ENCODE measurements at regions of chr14 and their contacts with region 1.

Region 1: DNA sequence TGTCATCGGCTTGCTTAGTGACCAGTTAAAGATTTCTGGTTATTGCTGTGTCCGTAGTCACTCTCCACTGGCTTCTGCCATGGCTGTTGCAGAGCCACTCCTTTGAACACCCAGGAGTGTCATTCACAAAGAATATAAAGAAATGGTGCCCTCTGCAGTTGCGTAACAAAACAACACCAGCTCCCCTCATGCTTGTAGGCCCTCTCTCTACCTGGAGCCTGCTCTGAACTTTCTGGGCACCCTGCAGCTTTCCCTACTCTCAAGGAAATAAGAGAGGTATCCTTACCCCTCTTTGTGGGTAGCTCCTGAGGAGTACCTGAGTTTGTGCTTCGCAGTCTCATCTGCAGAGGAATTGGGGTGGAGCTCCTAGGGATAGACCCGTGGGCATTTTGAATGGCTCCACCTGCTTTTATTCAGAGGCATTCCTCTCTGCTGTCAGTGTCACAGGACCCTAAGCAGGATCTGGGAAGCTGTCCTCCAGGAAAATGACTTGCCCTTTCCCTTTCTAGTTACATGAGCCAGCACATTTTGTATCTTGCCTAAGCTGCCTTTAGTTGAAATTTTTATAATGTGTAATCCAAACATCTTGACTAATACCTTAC is 97.2 kb upstream of the TMEM260 start:
- DNase-seq: peak; percentile 16
- H3K4me3 ChIP-seq: no peak overlapping the region
- H3K27ac ChIP-seq: no peak overlapping the region
- H3K4me1 ChIP-seq: no peaks in the 10 kb centered on the region
- H3K27me3 ChIP-seq: peaks cover 1 to 2% of the 10 kb centered on the region in 2 experiments
- CTCF ChIP-seq: peak; percentile 16 to 26
- POLR2A ChIP-seq: no peak

Region 2: GRCh38 chr14:55707365-55707804 is 775.0 kb before region 1 on chr14:
- CTCF ChIA-PET with region 1: interaction called, 19 read pairs
- POLR2A ChIA-PET with region 1: no interaction called
- dilution Hi-C with region 1: loop called (anchors 10 kb)
- intact Hi-C with region 1: no loop called
- DNase-seq: peak; percentile 51
- H3K4me3 ChIP-seq: no peak overlapping the region
- H3K27ac ChIP-seq: no peak overlapping the region
- H3K4me1 ChIP-seq: no peaks in the 10 kb centered on the region
- H3K27me3 ChIP-seq: no peaks in the 10 kb centered on the region
- CTCF ChIP-seq: peak; percentile 28 to 53
- POLR2A ChIP-seq: no peak